ENCODE measurements at regions of chr3 and their contacts with region 1.

Region 1: GRCh38 chr3:197599089-197599765 is 43.5 kb upstream of the BDH1 start:
- DNase-seq: peak; percentile 71
- H3K4me3 Mint-ChIP-seq: no peak overlapping the region
- H3K27ac Mint-ChIP-seq: no peak overlapping the region
- H3K4me1 Mint-ChIP-seq: peaks cover 14% of the 10 kb centered on the region
- H3K27me3 Mint-ChIP-seq: peaks cover 4% of the 10 kb centered on the region

Region 2: DNA sequence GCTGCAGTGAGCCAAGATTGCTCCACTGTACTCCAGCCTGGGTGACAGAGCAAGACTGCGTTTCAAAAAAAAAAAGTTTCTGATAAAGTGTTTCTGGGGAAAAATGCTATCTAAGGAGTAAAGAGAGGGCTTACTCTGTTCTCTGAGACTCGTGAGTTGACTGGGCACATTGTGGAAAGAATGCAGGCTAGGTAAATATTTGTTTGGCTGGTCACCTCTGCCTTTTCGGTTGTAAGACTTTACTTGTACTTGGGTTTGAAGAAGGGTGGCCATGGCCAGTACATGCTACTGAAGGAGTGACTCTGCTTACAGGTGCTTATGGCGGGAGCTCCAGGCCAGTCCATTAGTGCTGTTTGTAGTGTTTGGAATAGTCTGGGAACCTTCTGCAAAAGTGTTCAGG is 68.8 kb after region 1 on chr3:
- intact Hi-C with region 1: loop called (anchors 2 kb)
- DNase-seq: no peak
- H3K4me3 Mint-ChIP-seq: no peak overlapping the region
- H3K27ac Mint-ChIP-seq: no peak overlapping the region
- H3K4me1 Mint-ChIP-seq: no peaks in the 10 kb centered on the region
- H3K27me3 Mint-ChIP-seq: no peaks in the 10 kb centered on the region

Region 3: DNA sequence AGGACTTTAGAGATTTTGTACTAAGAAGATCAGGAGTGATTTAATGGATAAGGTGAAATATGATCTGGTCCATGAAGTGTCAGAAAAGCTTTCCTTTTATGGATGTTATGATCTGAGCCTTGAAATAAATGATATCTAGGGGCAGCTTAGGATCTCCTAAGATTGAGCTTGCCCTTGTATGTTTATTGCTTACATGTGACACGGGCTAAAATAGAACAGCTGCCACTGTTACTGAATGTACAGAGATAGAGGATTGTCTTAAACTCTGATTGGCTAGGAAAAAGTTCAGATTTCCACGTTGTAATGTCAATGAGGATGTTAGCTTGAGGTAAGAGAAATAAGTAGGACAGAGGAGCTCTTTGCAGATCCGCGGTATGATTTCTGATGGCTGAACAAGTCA is 159.3 kb after region 1 on chr3:
- intact Hi-C with region 1: no loop called
- DNase-seq: no peak
- H3K4me3 Mint-ChIP-seq: no peak overlapping the region
- H3K27ac Mint-ChIP-seq: no peak overlapping the region
- H3K4me1 Mint-ChIP-seq: peaks cover 10% of the 10 kb centered on the region
- H3K27me3 Mint-ChIP-seq: no peaks in the 10 kb centered on the region